Activated CD4-positive, alpha-beta T cell treated with anti-CD3 and anti-CD28 coated beads for 36 hours (primary cell): ENCODE measurements at regions of chr5 and their contacts with region 1.

Region 1: GRCh38 chr5:149852641-149853330 is 91.8 kb downstream of the PDE6A start:
- DNase-seq: peak; percentile 67
- ATAC-seq: no peak
- H3K4me3 Mint-ChIP-seq: no peak overlapping the region
- H3K27ac Mint-ChIP-seq: no peak overlapping the region
- H3K4me1 Mint-ChIP-seq: no peaks in the 10 kb centered on the region
- H3K27me3 Mint-ChIP-seq: no peaks in the 10 kb centered on the region

Region 2: GRCh38 chr5:148427370-148428042 is 1425.3 kb before region 1 on chr5:
- CTCF ChIA-PET with region 1: no interaction called
- POLR2A ChIA-PET with region 1: no interaction called
- intact Hi-C with region 1: no loop called
- DNase-seq: no peak
- ATAC-seq: no peak
- H3K4me3 Mint-ChIP-seq: no peak overlapping the region
- H3K27ac Mint-ChIP-seq: no peak overlapping the region
- H3K4me1 Mint-ChIP-seq: peaks cover 13% of the 10 kb centered on the region
- H3K27me3 Mint-ChIP-seq: no peaks in the 10 kb centered on the region

Region 3: DNA sequence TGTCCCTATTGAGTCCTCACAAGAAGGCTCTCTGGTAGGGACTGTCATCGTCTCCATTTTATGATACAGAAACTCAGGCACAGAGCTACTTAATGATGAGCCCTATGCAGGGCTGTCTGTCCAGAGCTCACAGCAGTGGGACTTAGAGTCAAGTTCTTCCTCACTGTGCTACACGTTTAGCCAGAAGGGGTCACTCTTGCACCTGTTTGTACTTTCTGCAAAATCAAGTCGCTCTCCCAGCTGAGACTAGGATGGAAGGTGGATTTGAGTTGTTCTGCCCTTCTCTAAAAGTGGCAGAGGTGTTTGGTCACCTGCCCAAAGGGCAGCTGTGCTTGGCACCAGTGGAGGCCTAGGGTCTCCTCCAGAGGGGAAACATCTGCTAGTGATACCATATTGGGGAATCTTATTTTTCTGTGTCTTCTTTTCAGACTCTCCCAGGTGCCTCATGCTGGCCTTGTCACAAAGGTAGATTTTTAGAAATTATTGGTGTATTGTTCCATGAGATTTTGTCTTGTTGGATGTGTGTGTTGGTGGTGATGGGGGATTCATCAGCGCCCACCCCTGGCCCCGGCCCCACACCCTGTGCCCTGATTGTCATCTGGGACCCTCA is 18.4 kb before region 1 on chr5:
- CTCF ChIA-PET with region 1: interaction called, 25 read pairs
- POLR2A ChIA-PET with region 1: no interaction called
- intact Hi-C with region 1: no loop called
- DNase-seq: peak; percentile 74
- ATAC-seq: peak; percentile 55
- H3K4me3 Mint-ChIP-seq: no peak overlapping the region
- H3K27ac Mint-ChIP-seq: no peak overlapping the region
- H3K4me1 Mint-ChIP-seq: peaks cover 5% of the 10 kb centered on the region
- H3K27me3 Mint-ChIP-seq: no peaks in the 10 kb centered on the region

Region 4: GRCh38 chr5:149841851-149842793 is 10.7 kb before region 1 on chr5:
- CTCF ChIA-PET with region 1: interaction called, 10 read pairs
- POLR2A ChIA-PET with region 1: no interaction called
- intact Hi-C with region 1: no loop called
- DNase-seq: no peak
- ATAC-seq: no peak
- H3K4me3 Mint-ChIP-seq: no peak overlapping the region
- H3K27ac Mint-ChIP-seq: no peak overlapping the region
- H3K4me1 Mint-ChIP-seq: no peaks in the 10 kb centered on the region
- H3K27me3 Mint-ChIP-seq: no peaks in the 10 kb centered on the region

Region 5: DNA sequence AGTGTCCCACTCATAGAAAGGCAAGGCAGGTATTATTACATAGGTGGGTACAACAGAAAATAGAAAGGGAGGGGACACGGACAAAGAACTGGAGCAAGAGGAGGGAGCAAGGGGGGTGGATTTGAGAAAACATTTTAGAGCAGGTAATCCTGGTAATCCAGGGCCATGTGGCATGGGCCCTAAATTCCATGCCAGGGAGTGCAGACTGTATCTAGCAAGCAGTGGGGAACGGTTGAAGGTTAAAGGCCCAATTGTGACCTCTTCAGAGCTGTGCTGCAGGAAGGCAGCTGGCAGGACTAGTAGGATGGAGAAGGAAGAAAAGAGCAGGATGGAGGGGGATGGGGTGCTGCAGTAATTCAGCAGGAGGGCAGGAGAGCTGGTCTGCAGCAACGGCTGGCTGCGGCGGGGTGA is 16.6 kb after region 1 on chr5:
- CTCF ChIA-PET with region 1: interaction called, 12 read pairs
- POLR2A ChIA-PET with region 1: no interaction called
- intact Hi-C with region 1: no loop called
- DNase-seq: no peak
- ATAC-seq: no peak
- H3K4me3 Mint-ChIP-seq: no peak overlapping the region
- H3K27ac Mint-ChIP-seq: no peak overlapping the region
- H3K4me1 Mint-ChIP-seq: no peaks in the 10 kb centered on the region
- H3K27me3 Mint-ChIP-seq: no peaks in the 10 kb centered on the region

Region 6: DNA sequence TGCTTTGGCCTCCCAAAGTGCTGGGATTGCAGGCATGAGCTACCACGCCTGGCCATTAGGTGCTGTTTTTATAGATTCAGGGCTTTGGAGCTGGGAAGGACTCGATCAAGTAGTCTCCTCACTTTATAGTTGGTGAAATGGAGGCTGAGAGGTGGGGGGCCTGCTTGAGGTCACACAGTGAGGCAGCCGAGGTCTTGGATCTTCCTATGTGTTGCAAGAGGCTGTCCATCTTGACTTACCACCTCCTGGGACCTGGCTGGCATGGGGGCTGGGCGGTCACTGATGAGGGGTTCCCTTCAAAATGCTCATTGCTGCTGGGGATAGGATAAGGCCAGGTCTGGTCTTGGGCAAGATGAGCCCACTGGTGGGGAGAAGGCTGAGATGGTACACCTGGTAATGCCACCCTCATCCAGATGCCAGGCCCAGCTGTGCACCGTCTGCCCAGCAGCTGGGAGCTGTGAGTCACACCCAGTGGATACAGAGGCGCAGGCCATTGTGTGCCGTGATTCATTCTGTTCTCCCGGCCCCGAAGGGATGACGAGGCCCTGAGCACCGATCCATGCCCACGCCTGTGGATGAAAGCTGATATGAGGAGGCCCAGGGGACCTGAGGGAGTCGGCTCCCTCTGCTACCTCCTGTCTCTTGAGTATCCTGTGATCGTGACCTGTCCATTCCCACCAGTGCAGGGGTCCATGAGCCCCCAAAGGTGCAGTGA is 644.6 kb after region 1 on chr5:
- CTCF ChIA-PET with region 1: no interaction called
- POLR2A ChIA-PET with region 1: no interaction called
- intact Hi-C with region 1: no loop called
- DNase-seq: no peak
- ATAC-seq: no peak
- H3K4me3 Mint-ChIP-seq: no peak overlapping the region
- H3K27ac Mint-ChIP-seq: no peak overlapping the region
- H3K4me1 Mint-ChIP-seq: no peaks in the 10 kb centered on the region
- H3K27me3 Mint-ChIP-seq: no peaks in the 10 kb centered on the region